ENCODE measurements at regions of chr15 and their contacts with region 1.

Region 1: GRCh38 chr15:73991726-73992593 is at the start of gene STOML1:
- DNase-seq: peak; percentile 93
- H3K4me3 Mint-ChIP-seq: peak within 1 kb of the TSS; percentile 81
- H3K27ac Mint-ChIP-seq: peak within 1 kb of the TSS; percentile 85
- H3K4me1 Mint-ChIP-seq: peaks cover 35% of the 10 kb centered on the region
- H3K27me3 Mint-ChIP-seq: no peaks in the 10 kb centered on the region
- total RNA-seq, gene STOML1: 8.6 and 9.2 TPM in 2 replicates

Region 2: GRCh38 chr15:73972984-73973682 is 18.8 kb before region 1 on chr15:
- intact Hi-C with region 1: loop called (anchors 2 kb)
- DNase-seq: peak; percentile 74
- H3K4me3 Mint-ChIP-seq: no peak overlapping the region
- H3K27ac Mint-ChIP-seq: no peak overlapping the region
- H3K4me1 Mint-ChIP-seq: peaks cover 34% of the 10 kb centered on the region
- H3K27me3 Mint-ChIP-seq: peaks cover 6% of the 10 kb centered on the region

Region 3: GRCh38 chr15:74007820-74008371 is 15.9 kb after region 1 on chr15:
- intact Hi-C with region 1: loop called (anchors 1 kb)
- DNase-seq: no peak
- H3K4me3 Mint-ChIP-seq: peak overlapping the region; percentile 15
- H3K27ac Mint-ChIP-seq: peak overlapping the region; percentile 97
- H3K4me1 Mint-ChIP-seq: peaks cover 46% of the 10 kb centered on the region
- H3K27me3 Mint-ChIP-seq: no peaks in the 10 kb centered on the region

Measured in activated T-helper 2 cell treated with anti-CD3 and anti-CD28 coated beads, Interferon-gamma antibody, Interleukin-2, Interleukin-4, amounts not matched to agents 10 μg/mL and 5 μg/mL and 100 μg/mL, durations not matched to agents 14 hours and 24 hours and 36 hours (primary cell).